Activated CD4-positive, alpha-beta memory T cell treated with anti-CD3 and anti-CD28 coated beads for 36 hours (primary cell): ENCODE measurements at regions of chr18 and their contacts with region 1.

Region 1: GRCh38 chr18:10525371-10526210 is at the start of gene NAPG:
- DNase-seq: peak; percentile 93
- H3K4me3 Mint-ChIP-seq: peak within 1 kb of the TSS; percentile 94
- H3K27ac Mint-ChIP-seq: peak within 1 kb of the TSS; percentile 95
- H3K4me1 Mint-ChIP-seq: peaks cover 45% of the 10 kb centered on the region
- H3K27me3 Mint-ChIP-seq: no peaks in the 10 kb centered on the region
- total RNA-seq, gene NAPG: 31.8 to 32.7 TPM

Region 2: DNA sequence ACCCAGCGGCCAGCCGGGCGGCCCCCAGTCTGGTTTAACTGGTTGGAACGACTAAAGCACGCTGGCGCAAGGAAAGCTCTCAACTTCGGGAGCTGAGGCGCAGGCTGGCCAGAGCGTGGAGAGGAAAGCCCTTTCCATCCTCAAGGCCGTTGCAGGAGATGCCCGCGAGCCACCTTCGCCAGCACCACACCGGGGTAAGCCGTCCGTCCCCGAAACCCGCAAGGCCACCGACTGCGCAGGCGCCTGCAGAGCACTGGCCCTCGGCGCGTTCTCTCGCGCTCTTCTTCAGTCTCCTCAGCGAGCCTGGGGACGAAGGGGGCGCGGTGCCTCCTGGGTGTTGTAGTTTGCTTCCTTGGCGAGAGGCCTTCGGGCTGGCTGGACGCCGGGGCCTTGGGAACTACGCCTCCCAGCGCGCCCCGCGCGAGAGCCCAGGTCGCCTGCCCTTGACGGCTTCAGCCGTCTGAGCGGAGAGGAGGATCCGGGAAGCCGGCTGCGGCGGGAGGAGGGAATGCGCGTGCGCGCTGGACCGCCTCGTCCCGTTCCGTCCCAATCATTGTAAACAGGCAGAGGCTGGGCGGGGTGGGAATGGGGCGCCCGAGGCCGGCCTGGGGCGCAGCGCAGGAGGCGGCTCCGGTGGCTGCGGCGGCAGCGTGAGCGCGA is 1050.5 kb before region 1 on chr18 and contains the start of gene RALBP1:
- CTCF ChIA-PET with region 1: no interaction called
- POLR2A ChIA-PET with region 1: no interaction called
- intact Hi-C with region 1: loop called (anchors 5 kb)
- DNase-seq: peak; percentile 99
- H3K4me3 Mint-ChIP-seq: peak within 1 kb of the TSS; percentile 92
- H3K27ac Mint-ChIP-seq: peak within 1 kb of the TSS; percentile 93
- H3K4me1 Mint-ChIP-seq: peaks cover 28% of the 10 kb centered on the region
- H3K27me3 Mint-ChIP-seq: peaks cover 11% of the 10 kb centered on the region
- total RNA-seq, gene RALBP1: 53.1 to 54.7 TPM

Region 3: GRCh38 chr18:9708057-9708433 is 817.5 kb before region 1 on chr18 and contains the start of gene RAB31:
- CTCF ChIA-PET with region 1: no interaction called
- POLR2A ChIA-PET with region 1: no interaction called
- intact Hi-C with region 1: loop called (anchors 5 kb)
- DNase-seq: peak; percentile 24
- H3K4me3 Mint-ChIP-seq: peak within 1 kb of the TSS; percentile 73
- H3K27ac Mint-ChIP-seq: no peak within 1 kb of the TSS
- H3K4me1 Mint-ChIP-seq: peaks cover 31% of the 10 kb centered on the region
- H3K27me3 Mint-ChIP-seq: peaks cover 76% of the 10 kb centered on the region
- total RNA-seq, gene RAB31: 0.58 to 0.71 TPM

Region 4: GRCh38 chr18:10121786-10122542 is 403.6 kb before region 1 on chr18:
- CTCF ChIA-PET with region 1: no interaction called
- POLR2A ChIA-PET with region 1: no interaction called
- intact Hi-C with region 1: loop called (anchors 10 kb)
- DNase-seq: no peak
- H3K4me3 Mint-ChIP-seq: no peak overlapping the region
- H3K27ac Mint-ChIP-seq: no peak overlapping the region
- H3K4me1 Mint-ChIP-seq: peaks cover 18% of the 10 kb centered on the region
- H3K27me3 Mint-ChIP-seq: peaks cover 3% of the 10 kb centered on the region

Region 5: DNA sequence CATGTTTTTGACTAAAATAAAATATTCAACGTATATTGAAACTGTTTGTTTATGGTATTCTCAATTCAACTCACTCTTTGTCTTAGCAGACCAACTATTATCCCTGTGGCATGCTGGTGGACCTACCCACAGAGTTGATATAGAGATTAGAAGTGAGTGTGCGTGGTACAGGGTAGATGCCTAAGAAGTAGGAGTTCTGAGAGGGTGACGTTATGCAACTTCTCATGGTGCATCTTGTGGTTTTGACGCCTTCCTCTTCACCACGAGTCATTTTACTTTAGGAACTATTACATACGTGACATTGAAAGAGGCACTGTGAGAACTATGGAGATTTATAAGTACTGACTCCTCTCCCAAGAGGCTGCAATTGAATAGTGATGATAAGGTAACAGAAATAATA is 26.4 kb before region 1 on chr18:
- CTCF ChIA-PET with region 1: no interaction called
- POLR2A ChIA-PET with region 1: no interaction called
- intact Hi-C with region 1: loop called (anchors 2 kb)
- DNase-seq: peak; percentile 27
- H3K4me3 Mint-ChIP-seq: no peak overlapping the region
- H3K27ac Mint-ChIP-seq: no peak overlapping the region
- H3K4me1 Mint-ChIP-seq: peaks cover 4% of the 10 kb centered on the region
- H3K27me3 Mint-ChIP-seq: peaks cover 17% of the 10 kb centered on the region